ENCODE measurements at regions of chr2 and their contacts with region 1.

Region 1: DNA sequence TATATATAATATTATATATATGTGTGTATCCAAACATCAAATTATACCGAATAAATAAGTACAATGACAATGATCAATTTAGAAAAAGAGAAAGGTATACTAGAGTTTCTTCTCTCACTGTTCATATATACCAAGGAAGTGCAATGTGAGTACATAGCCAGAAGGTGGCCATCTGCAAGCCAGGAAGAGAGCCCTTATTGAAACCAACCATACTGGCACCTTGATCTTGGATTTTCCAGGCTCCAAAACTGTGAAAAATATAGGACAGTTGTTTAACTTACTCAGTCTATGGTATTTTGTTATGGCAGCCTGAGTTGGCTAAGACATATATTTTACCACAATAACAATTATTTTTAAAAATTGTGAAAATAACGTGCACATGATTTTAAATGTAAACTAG is 1490.2 kb upstream of the SLC39A10 start:
- DNase-seq: peak; percentile 22
- ATAC-seq: no peak
- H3K4me3 ChIP-seq: no peak overlapping the region
- H3K4me3 Mint-ChIP-seq: no peak overlapping the region
- H3K27ac ChIP-seq: no peak overlapping the region
- H3K27ac Mint-ChIP-seq: no peak overlapping the region
- H3K4me1 ChIP-seq: no peaks in the 10 kb centered on the region
- H3K4me1 Mint-ChIP-seq: no peaks in the 10 kb centered on the region
- H3K27me3 ChIP-seq: no peaks in the 10 kb centered on the region
- H3K27me3 Mint-ChIP-seq: no peaks in the 10 kb centered on the region
- CTCF ChIP-seq: peak; percentile 69

Region 2: GRCh38 chr2:195318440-195319111 is 1151.8 kb after region 1 on chr2:
- CTCF ChIA-PET with region 1: no interaction called
- POLR2A ChIA-PET with region 1: no interaction called
- intact Hi-C with region 1: loop called (anchors 2 kb)
- DNase-seq: peak; percentile 53
- ATAC-seq: no peak
- H3K4me3 ChIP-seq: no peak overlapping the region
- H3K4me3 Mint-ChIP-seq: no peak overlapping the region
- H3K27ac ChIP-seq: no peak overlapping the region
- H3K27ac Mint-ChIP-seq: no peak overlapping the region
- H3K4me1 ChIP-seq: no peaks in the 10 kb centered on the region
- H3K4me1 Mint-ChIP-seq: no peaks in the 10 kb centered on the region
- H3K27me3 ChIP-seq: no peaks in the 10 kb centered on the region
- H3K27me3 Mint-ChIP-seq: no peaks in the 10 kb centered on the region
- CTCF ChIP-seq: peak; percentile 76

Region 3: GRCh38 chr2:195937176-195937575 is 1770.4 kb after region 1 on chr2:
- CTCF ChIA-PET with region 1: interaction called, 3 read pairs
- POLR2A ChIA-PET with region 1: no interaction called
- intact Hi-C with region 1: loop called (anchors 2 kb)
- DNase-seq: no peak
- ATAC-seq: no peak
- H3K4me3 ChIP-seq: no peak overlapping the region
- H3K4me3 Mint-ChIP-seq: no peak overlapping the region
- H3K27ac ChIP-seq: no peak overlapping the region
- H3K27ac Mint-ChIP-seq: no peak overlapping the region
- H3K4me1 ChIP-seq: no peaks in the 10 kb centered on the region
- H3K4me1 Mint-ChIP-seq: no peaks in the 10 kb centered on the region
- H3K27me3 ChIP-seq: peaks cover 0 to 4% (median 0%) of the 10 kb centered on the region in 4 experiments
- H3K27me3 Mint-ChIP-seq: no peaks in the 10 kb centered on the region
- CTCF ChIP-seq: no peak

Measured in B cell (primary cell).